Motor neuron (in vitro differentiated cells): ENCODE measurements at regions of chr4 and their contacts with region 1.

Region 1: DNA sequence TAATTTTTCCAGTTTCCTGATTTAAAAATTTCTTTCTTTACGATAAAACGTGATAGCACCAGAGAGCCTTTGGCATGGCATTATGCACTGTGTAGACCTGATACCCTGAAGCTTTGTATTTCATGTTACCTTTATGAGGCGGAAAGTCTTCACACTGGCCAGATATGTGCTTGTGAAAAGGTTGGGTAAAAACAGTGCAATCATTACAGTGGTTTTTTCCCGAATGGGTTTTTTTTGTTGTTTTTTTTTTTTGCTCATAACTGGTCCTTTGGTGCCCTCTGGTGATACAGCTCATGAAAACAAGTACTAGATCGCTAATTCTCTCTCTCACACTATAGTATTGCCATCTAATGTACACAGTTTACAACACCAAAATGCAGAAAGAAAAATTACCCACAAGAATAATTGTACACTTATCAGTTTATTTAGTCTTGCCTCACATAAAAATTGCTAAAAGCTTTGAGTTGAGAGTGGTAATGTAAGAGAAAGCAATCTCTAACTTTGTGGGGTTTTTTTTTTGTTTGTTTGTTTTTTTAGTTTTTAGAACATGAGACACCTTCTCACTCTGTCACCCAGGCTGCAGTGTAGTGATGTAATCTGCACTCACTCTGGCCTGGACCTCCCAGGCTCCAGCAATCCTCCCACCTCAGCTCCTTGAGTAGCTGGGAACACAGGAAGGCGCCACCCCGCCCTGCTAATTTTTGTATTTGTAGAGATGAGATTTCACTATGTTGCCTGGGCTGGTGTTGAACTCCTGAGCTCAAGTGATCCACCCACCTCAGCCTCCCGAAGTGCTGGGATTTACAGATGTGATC is 21.3 kb downstream of the SPCS3 start:
- ATAC-seq: peak; percentile 48 to 69 (median 62)
- H3K4me3 ChIP-seq: no peak overlapping the region
- H3K27ac ChIP-seq: no peak overlapping the region
- H3K4me1 ChIP-seq: no peaks in the 10 kb centered on the region

Region 2: DNA sequence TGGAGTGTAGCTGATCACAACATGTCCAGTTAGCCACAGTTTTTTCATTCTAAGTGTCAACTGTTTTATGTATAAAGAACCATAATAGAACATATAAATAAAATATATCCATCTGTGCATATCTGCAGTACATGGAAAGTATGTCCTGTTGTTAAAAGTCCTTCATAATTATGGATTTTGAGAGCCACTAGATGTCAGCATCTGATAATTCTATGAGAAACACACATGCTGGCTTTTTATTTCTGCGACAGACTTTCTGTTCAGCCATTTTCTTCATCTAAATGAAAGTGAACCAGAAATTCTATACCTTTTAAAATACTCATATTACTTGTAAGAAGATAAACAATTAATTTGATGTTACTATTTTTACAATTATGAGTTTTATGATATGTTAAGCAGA is 780.5 kb before region 1 on chr4:
- in situ Hi-C with region 1: loop called in 6 of 9 experiments (anchors 25 kb)
- ATAC-seq: peak in 6 of 8 experiments; percentile 47 to 92 (median 60)
- H3K4me3 ChIP-seq: no peak overlapping the region
- H3K27ac ChIP-seq: no peak overlapping the region
- H3K4me1 ChIP-seq: no peaks in the 10 kb centered on the region

Region 3: GRCh38 chr4:176002007-176002613 is 339.0 kb before region 1 on chr4:
- in situ Hi-C with region 1: loop called in 1 of 9 experiments (anchors 25 kb)
- ATAC-seq: peak; percentile 59 to 85 (median 80)
- H3K4me3 ChIP-seq: peak overlapping the region; percentile 42 to 80 (median 52)
- H3K27ac ChIP-seq: no peak overlapping the region
- H3K4me1 ChIP-seq: peaks cover 0 to 6% of the 10 kb centered on the region in 2 donors

Region 4: GRCh38 chr4:176034499-176034898 is 306.6 kb before region 1 on chr4:
- in situ Hi-C with region 1: loop called in 4 of 9 experiments (anchors 25 kb)
- ATAC-seq: peak in 3 of 8 experiments; percentile 24 to 47 (median 35)
- H3K4me3 ChIP-seq: no peak overlapping the region
- H3K27ac ChIP-seq: no peak overlapping the region
- H3K4me1 ChIP-seq: no peaks in the 10 kb centered on the region

Region 5: DNA sequence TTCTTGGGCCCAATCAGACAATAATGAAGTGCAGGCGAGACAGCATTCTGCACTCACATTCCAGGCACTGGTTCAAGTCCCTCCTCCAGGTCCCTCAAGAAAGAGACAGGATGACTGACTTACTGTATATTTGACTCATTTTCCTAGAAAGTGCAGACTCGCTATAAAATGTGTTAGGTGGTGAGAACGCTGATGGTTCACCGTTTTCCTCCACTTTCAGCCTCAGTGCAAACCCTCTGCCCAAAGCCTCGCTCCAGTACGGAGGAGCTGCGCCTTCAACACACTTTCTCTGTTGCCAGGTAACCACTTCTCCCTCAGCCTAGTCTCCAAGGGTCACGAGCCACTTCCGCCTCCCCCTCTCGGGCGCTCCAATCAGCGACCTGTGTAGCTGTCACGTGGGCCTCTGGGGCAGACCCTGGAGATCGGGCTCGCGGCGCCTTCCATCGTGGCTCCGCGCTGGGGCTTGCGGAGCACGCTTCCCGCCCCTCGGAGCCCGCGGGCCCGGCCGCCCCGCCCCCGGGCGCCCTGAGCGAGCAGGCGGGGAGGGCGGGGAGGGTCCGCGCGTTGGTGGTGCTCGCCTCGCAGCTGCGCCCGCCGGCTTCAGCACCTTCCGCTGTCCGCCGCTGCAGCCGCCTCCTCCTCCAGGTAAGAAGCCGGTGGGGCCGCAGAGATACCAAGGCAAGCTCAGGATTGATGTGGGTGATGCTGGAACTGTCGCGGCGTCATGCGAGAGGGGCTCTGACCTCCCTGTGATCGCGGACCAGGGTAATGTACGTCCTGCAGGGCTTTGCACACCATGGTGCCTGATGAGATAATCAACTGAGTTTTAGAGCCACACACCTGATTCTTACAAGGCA is 275.4 kb before region 1 on chr4 and contains the start of gene WDR17:
- in situ Hi-C with region 1: loop called in 1 of 9 experiments (anchors 25 kb)
- ATAC-seq: peak; percentile 97 to 99 (median 98)
- H3K4me3 ChIP-seq: peak within 1 kb of the TSS; percentile 55 to 64 (median 62)
- H3K27ac ChIP-seq: peak within 1 kb of the TSS; percentile 72 to 76
- H3K4me1 ChIP-seq: peaks cover 4 to 5% of the 10 kb centered on the region in 2 donors
- total RNA-seq, gene WDR17: 1.3 to 23.5 (median 12.8) TPM

Region 6: GRCh38 chr4:176150356-176150682 is 190.8 kb before region 1 on chr4:
- in situ Hi-C with region 1: loop called in 1 of 9 experiments (anchors 25 kb)
- ATAC-seq: peak in 3 of 8 experiments; percentile 57 to 67 (median 64)
- H3K4me3 ChIP-seq: no peak overlapping the region
- H3K27ac ChIP-seq: no peak overlapping the region
- H3K4me1 ChIP-seq: no peaks in the 10 kb centered on the region

Region 7: DNA sequence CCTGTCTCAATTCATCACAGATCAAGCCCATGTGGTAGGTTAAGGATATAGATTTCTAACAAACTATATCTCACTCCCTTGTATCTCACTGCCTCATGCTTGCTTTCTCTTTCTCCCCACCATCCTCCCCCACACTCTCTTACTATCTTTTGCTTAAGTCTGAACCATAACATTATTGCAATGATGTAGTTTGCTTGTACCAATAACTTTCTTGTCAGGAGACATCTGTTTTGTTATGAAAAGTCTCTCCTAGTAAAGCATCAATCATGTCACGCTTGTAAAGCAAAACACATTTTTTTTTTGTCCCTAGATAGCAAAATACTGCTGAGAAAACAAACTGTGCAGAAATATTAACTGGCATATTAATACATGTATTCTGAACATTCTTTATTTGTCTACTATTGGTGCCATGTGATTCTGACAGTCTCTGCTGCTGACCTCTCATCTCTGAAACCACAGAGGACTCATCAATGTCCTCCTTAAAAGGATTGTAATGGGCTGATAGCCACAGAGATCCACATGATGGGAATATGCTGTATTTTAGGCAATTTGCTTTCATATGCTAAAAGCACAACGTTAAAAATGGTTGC is 234.2 kb after region 1 on chr4:
- in situ Hi-C with region 1: no loop called
- ATAC-seq: peak in 3 of 8 experiments; percentile 22 to 76 (median 62)
- H3K4me3 ChIP-seq: no peak overlapping the region
- H3K27ac ChIP-seq: no peak overlapping the region
- H3K4me1 ChIP-seq: peaks cover 4 to 5% of the 10 kb centered on the region in 2 donors